PC-3 (cell line): ENCODE measurements at regions of chr12 and their contacts with region 1.

Region 1: DNA sequence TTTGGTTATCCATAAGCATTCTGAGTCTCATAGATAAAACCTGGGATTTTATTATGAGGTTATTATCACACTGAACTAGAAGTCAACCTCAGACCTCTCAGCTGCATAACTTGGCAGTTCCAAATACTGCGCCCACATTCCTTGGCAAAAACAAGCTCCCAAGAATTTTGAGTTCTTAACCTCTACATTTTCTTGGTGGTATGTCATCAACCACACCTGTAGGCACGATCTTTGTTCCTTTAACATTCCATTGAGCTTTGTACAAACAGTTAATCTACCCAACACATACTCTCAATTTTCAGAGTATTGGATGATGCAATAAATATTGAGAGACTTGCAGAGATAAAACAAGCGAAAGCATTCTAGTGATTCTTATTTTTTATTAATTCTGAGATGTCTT is 371.8 kb upstream of the PRICKLE1 start:
- DNase-seq: peak; percentile 97
- ATAC-seq: peak; percentile 49
- H3K4me3 ChIP-seq: no peak overlapping the region
- H3K27ac ChIP-seq: peak overlapping the region; percentile 78
- H3K4me1 ChIP-seq: peaks cover 85% of the 10 kb centered on the region
- H3K27me3 ChIP-seq: no peaks in the 10 kb centered on the region
- CTCF ChIP-seq: no peak

Region 2: DNA sequence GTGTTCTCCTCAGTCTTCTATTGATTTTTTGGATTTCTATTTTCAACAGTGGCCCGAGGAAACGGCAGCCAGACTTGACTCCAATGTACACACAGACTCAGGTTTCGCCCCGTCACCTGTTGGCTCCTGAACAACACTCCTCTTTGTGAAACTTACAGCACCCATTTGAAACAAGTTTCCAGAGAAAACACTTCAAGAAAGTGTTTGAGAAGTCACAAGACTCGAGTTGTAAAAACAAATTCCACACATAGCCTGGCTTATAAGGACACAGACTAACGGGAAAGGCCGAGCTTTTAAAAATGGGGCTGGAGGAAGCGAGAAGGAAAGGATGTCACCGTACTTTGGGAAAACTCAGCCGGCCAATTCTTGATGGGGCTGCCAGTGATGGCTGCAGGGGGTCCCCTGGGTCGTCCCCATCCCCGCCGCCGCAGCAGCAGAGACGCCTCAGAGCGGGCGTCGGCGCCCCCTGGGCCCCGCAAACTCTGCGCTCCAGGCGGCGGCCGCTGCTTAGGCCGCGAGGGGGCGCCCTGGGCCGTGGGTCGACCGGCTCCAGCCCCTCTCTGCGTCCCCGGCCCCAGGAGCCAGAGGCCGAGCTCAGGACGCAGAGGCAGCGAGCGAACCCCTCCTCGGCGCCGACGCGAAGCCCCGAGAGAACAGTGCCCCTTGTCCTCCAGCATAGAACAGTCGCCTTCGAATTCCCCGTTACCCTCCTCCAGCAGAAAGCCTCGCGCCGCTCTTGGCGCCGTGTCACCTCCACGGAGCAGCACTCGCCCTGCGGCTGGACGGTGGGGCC is 478.8 kb before region 1 on chr12:
- CTCF ChIA-PET with region 1: interaction called, 4 read pairs
- POLR2A ChIA-PET with region 1: no interaction called
- intact Hi-C with region 1: loop called (anchors 2 kb)
- DNase-seq: peak; percentile 73
- ATAC-seq: peak; percentile 82
- H3K4me3 ChIP-seq: peak overlapping the region; percentile 78
- H3K27ac ChIP-seq: peak overlapping the region; percentile 54
- H3K4me1 ChIP-seq: peaks cover 18% of the 10 kb centered on the region; the same call in 1 of the 2 replicates
- H3K27me3 ChIP-seq: no peaks in the 10 kb centered on the region
- CTCF ChIP-seq: peak; percentile 94

Region 3: DNA sequence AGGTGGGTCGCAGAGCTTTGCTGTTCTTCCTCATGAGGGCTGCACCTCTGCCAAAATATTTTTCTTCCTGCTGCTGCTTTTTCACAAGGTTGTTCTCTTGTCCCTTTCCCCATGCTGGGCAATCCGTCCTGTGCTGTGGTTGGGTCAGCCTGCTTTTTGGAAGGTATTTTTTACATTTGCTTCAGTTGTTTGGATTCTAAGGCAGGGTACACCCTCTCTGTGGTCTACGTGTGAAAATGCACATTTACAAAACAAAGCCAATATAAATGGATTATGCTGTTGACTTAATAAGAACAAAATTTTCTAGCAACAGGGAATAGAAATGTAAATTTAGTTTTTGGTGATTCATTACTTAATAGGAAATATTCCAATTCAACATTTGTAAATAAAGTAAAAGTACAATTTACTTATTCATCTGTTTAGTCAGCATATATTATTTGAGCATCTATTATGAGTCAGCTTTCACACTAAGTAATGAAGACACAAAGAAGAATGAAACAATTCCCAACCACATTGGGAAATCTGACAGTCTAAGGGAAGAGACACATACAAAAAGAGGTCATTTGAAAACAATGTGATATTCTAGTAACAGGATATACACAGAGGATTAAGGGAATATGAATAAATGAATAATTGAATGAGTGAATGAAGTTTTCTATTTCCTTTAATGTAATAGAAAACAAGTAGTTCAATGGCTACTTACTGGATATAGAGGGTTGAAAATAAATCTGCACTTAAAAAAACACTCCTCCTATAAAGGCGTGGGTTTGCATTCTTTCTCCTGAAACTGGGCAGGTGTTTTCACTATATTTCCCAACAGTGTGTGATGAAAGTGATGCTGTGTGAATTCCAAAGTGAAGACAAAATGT is 277.2 kb before region 1 on chr12:
- CTCF ChIA-PET with region 1: no interaction called
- POLR2A ChIA-PET with region 1: no interaction called
- intact Hi-C with region 1: loop called (anchors 1 kb)
- DNase-seq: peak; percentile 71
- ATAC-seq: peak; percentile 75
- H3K4me3 ChIP-seq: no peak overlapping the region
- H3K27ac ChIP-seq: peak overlapping the region; percentile 49
- H3K4me1 ChIP-seq: peaks cover 40% of the 10 kb centered on the region
- H3K27me3 ChIP-seq: no peaks in the 10 kb centered on the region
- CTCF ChIP-seq: no peak

Region 4: DNA sequence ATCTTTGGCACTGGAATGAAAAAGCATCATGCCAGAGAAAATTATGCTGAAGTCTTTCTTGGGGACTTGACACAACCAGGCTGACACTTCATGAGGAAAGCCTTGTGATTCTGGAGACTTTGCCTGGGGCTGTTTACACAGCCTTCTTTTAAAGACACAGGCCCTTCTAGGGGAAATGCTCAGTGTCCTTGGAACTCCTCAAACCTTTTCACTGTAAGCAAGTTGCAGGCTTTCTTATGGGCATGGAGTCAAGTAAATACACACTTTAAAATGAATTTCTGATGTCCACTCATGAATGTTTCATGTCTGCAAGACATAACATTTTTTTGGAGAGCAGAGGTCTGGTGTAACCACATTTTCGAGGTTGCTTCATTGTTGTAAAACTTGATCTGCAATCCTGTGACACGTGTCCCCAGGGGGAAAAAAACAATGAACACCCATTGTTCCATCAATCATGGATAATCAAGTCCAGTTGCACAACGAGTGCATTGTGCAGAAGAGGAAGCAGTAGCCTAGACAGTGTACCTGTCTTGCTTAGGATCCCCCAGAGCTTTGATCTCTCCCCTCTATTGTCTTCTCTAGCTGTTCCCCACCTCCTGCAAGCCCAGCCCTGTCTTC is 216.7 kb before region 1 on chr12:
- CTCF ChIA-PET with region 1: no interaction called
- POLR2A ChIA-PET with region 1: no interaction called
- intact Hi-C with region 1: loop called (anchors 1 kb)
- DNase-seq: peak; percentile 90
- ATAC-seq: peak; percentile 34
- H3K4me3 ChIP-seq: no peak overlapping the region
- H3K27ac ChIP-seq: peak overlapping the region; percentile 33
- H3K4me1 ChIP-seq: peaks cover 44% of the 10 kb centered on the region
- H3K27me3 ChIP-seq: no peaks in the 10 kb centered on the region
- CTCF ChIP-seq: no peak

Region 5: DNA sequence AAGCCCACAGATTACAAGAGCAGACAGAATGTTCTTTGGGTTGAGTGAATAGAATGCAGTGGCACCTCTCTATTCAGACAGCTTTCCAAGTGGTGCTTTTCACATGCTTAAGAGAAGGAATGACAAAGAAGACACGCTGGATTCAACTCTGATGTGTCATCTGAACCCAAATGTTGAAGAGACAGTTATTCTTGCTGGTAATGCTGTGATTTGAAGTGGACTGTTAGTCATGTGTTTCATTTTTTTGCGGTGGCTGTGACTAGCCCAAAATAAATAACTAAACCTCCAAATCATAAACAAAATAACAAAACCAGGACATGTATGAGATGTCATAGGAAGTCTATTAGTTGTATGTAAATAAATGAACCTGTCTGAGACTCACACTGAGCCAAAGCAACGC is 20.0 kb after region 1 on chr12:
- CTCF ChIA-PET with region 1: no interaction called
- POLR2A ChIA-PET with region 1: no interaction called
- intact Hi-C with region 1: loop called (anchors 2 kb)
- DNase-seq: peak; percentile 80
- ATAC-seq: peak; percentile 93
- H3K4me3 ChIP-seq: no peak overlapping the region
- H3K27ac ChIP-seq: 0 out of 2 replicates have a peak overlapping the region, but pooled peaks have one; percentile 15
- H3K4me1 ChIP-seq: peaks cover 24% of the 10 kb centered on the region
- H3K27me3 ChIP-seq: no peaks in the 10 kb centered on the region
- CTCF ChIP-seq: no peak

Region 6: DNA sequence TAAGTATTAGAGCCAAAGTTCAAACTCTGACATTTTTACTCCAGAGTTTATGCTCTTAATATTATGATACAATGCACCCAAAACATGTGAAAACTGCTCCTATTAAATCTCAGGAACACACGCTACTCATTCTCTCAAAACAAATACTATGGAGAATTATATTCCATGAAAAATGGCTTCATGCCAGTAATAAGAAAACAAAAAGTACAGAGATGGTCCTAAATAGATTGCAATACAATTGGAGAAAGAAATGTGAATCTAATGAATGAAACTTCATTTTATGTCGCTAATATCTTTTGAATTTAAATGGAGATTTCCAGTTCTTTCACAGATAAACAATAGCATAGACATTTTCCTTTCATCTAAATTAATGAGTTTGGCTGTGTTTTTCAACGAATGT is 206.3 kb after region 1 on chr12:
- CTCF ChIA-PET with region 1: no interaction called
- POLR2A ChIA-PET with region 1: no interaction called
- intact Hi-C with region 1: loop called (anchors 1 kb)
- DNase-seq: no peak
- ATAC-seq: no peak
- H3K4me3 ChIP-seq: no peak overlapping the region
- H3K27ac ChIP-seq: no peak overlapping the region
- H3K4me1 ChIP-seq: peaks cover 10% of the 10 kb centered on the region; the same call in 1 of the 2 replicates
- H3K27me3 ChIP-seq: no peaks in the 10 kb centered on the region
- CTCF ChIP-seq: no peak